Posterior vena cava (tissue), 2 donors: ENCODE measurements at regions of chr15 and their contacts with region 1.

Region 1: DNA sequence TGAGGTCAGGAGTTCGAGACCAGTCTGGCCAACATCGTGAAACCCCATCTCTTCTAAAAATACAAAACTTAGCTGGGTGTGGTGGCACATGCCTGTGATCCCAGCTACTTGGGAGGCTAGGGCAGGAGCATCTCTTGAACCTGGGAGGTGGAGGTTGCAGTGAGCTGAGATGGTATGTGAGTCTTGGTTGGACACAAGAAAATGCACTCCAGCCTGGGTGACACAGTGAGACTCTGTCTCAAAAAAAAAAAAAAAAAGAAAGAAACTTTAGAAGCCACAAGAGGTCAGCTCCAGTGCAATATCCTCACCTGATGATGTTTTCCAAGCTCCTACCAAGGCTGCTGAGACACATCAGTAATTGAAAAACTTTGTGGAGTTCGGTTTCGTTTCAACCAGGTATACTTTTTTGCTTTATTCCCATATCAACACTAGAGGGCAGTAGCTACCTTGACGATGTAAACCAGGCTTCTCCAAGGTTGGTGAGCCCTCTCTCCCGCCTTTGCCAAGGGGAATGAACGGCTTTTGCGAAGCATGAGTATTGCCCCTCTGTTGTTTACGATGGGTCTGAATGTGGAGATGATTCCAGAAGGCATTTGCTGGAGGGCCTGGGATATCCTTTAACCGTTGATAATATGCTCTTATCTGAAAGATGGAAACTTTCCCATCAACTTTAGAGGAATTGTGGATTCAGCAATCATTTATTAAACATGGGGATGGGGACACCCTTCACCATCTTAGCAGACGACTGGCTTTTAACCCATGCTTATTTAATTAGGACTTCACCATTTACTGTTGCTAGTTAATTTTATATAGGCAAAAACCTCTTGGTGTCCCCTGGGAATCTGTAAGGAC is 202.8 kb downstream of the SV2B start:
- DNase-seq: no peak

Region 2: GRCh38 chr15:91208371-91208770 is 94.4 kb before region 1 on chr15:
- intact Hi-C with region 1: no loop called
- DNase-seq: no peak

Region 3: GRCh38 chr15:91694831-91695210 is 392.0 kb after region 1 on chr15:
- intact Hi-C with region 1: loop called in 1 of 2 experiments (anchors 10 kb)
- DNase-seq: no peak

Region 4: GRCh38 chr15:91845720-91846119 is 542.9 kb after region 1 on chr15:
- intact Hi-C with region 1: loop called (anchors 2 to 10 kb)
- DNase-seq: no peak

Region 5: DNA sequence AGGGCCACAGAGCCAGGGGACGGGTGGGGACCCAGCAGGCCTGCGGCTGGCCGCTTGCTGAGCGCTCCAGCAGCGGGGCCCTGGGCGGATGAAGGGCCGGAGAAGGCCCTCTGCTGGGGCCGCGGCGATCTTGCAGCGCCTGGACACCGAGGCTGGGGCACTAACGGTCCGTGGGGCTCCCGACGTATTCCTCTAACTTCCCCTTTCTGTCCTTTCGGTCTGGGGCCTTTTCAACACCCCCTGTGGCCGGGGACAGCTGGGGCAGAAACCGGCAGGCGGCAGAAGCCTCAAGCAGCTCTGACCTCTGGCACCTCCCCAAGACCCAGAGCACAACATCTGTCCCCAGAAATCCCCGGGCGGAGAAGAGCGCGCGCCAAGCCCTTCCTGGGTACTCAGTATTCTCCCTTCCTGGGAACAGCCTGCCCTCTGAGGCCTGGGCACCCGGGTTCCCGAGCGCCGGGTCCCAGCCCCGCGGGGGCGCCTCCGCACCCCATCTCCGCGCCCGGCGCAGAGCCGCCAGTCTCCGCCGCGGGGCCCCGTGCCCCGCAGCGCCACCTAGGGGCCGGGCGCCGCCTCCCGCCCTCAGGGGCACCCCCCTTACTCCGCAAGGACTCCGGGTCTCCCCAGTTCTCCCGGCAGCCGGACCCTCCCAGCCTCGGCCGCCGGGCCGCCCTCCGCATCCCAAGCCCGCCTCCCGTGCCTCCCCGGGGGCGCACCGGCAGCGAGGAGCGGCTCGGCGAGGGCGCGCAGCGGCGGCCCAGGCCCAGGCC is 550.1 kb after region 1 on chr15:
- intact Hi-C with region 1: loop called in 1 of 2 experiments (anchors 10 kb)
- DNase-seq: peak; percentile 96